Heart left ventricle (tissue), 16 donors: ENCODE measurements at regions of chr11 and their contacts with region 1.

Region 1: DNA sequence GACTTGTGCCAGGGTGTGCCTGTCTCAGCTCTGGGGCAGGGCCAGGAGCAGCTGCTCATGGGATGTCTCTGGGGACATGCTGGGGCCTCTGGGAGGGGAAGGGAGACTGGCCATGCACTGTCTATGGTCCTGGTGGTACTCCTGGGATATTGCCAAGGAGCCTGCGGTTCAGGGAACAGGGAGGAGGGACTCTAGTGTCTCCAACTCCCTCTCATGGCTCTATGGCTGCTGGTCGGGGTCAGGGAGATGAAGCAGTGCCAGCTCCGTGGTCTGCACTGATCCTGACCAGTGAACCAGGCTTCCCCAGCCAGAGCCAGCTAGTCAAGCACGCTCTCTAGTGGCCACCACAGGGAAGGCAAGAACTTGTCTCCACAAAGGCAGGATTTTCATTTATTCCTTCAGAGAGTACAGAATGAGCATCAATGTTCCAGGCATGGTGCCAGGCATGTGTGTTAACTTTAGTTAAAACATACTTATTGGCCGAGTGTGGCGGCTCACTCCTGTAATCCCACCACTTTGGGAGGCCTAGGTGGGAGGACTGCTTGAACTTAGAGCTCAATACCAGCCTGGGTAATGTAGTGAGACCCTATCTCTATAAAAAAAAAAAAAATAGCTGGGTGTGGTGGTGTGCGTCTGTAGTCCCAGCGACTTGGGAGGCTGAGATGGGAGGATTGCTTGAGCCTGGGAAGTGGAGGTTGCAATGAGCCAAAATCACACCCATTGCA is 2.5 kb upstream of the BEST1 start:
- DNase-seq: peak; percentile 85 to 93 (median 87)
- ATAC-seq: peak; percentile 57 to 87 (median 82)
- H3K4me3 ChIP-seq: no peak overlapping the region
- H3K27ac ChIP-seq: no peak overlapping the region
- H3K4me1 ChIP-seq: peaks cover 0 to 29% (median 11%) of the 10 kb centered on the region in 12 donors
- H3K27me3 ChIP-seq: no peaks in the 10 kb centered on the region
- CTCF ChIP-seq: peak; percentile 87 to 98 (median 93)
- POLR2A ChIP-seq: no peak

Region 2: DNA sequence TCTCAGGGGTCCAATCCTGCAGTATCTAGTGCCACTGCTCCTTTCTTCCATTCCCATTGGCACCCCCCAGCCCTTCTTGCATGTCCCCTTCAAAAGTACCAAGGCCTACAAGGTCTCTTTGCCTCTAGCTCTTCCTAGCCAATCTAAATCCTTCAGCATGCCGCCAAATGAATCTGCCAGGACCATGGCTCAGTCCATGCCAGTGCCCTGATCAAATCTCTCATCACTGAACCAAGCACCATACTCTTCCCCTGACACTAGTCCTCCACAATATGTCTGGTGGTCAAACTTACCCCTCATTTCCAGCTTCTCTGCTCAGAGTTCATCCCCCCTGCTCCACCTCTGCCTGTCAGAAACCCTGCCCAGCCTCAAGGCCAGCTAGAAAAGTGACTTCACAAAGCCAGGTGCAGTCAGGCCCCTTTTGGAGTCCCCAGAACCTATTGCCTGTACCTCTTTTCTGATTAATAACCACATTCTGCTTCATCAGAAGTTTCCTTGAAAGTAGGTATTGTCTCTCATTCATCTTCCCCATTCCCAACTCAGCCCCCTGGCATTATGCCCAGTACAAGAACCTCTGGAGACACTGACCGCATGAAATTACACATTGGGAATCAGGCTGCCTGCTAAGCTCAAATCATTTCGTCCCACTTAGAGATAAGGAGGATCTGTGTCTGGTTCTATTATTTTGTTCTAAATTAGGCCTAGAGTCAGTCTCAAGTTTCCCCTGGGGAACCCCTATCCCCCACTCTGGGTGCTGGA is 143.6 kb before region 1 on chr11:
- intact Hi-C with region 1: loop called in 7 of 10 experiments (anchors 5 kb)
- DNase-seq: peak in 1 of 5 donors; percentile 15
- ATAC-seq: no peak
- H3K4me3 ChIP-seq: no peak overlapping the region
- H3K27ac ChIP-seq: no peak overlapping the region
- H3K4me1 ChIP-seq: peaks cover 0 to 7% (median 0%) of the 10 kb centered on the region in 12 donors
- H3K27me3 ChIP-seq: no peaks in the 10 kb centered on the region
- CTCF ChIP-seq: no peak
- POLR2A ChIP-seq: no peak

Region 3: DNA sequence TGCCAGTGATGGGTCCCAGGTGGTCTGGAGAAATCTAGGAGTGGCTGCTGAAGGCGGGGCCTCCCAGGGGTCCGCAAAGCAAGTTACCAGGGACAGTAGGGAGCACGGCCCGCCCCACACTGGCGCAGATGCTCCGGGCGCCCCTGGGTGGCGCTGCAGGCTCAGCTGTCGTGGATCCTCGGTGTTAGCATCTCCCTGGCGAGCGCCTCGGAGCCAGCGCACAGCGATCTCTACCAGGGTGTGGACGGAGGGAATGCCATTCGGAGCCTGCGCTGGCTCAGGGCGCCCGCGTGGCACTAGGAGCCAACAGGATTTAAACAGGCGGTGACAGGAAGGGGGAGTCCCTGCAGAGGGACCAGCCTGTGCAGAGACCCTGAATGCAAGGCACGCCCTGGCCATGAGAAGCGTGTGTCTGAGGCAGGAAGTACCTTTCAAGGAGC is 76.5 kb before region 1 on chr11:
- intact Hi-C with region 1: loop called in 7 of 10 experiments (anchors 1 to 2 kb)
- DNase-seq: peak; percentile 80 to 92 (median 88)
- ATAC-seq: peak; percentile 79 to 90 (median 84)
- H3K4me3 ChIP-seq: peak overlapping the region in 7 of 12 donors; percentile 11 to 41 (median 20)
- H3K27ac ChIP-seq: peak overlapping the region in 9 of 12 donors; percentile 1 to 82 (median 56)
- H3K4me1 ChIP-seq: peaks cover 2 to 48% (median 20%) of the 10 kb centered on the region in 12 donors
- H3K27me3 ChIP-seq: no peaks in the 10 kb centered on the region
- CTCF ChIP-seq: peak; percentile 88 to 98 (median 94)
- POLR2A ChIP-seq: peak in 1 of 2 donors; percentile 13

Region 4: GRCh38 chr11:61899146-61899841 is 48.4 kb before region 1 on chr11:
- intact Hi-C with region 1: loop called (anchors 1 to 2 kb)
- DNase-seq: peak; percentile 72 to 93 (median 83)
- ATAC-seq: peak; percentile 70 to 85 (median 81)
- H3K4me3 ChIP-seq: no peak overlapping the region
- H3K27ac ChIP-seq: peak overlapping the region in 5 of 12 donors; percentile 2 to 36 (median 11)
- H3K4me1 ChIP-seq: peaks cover 0 to 22% (median 3%) of the 10 kb centered on the region in 12 donors
- H3K27me3 ChIP-seq: no peaks in the 10 kb centered on the region
- CTCF ChIP-seq: peak; percentile 99 to 100 (median 100)
- POLR2A ChIP-seq: no peak

Region 5: DNA sequence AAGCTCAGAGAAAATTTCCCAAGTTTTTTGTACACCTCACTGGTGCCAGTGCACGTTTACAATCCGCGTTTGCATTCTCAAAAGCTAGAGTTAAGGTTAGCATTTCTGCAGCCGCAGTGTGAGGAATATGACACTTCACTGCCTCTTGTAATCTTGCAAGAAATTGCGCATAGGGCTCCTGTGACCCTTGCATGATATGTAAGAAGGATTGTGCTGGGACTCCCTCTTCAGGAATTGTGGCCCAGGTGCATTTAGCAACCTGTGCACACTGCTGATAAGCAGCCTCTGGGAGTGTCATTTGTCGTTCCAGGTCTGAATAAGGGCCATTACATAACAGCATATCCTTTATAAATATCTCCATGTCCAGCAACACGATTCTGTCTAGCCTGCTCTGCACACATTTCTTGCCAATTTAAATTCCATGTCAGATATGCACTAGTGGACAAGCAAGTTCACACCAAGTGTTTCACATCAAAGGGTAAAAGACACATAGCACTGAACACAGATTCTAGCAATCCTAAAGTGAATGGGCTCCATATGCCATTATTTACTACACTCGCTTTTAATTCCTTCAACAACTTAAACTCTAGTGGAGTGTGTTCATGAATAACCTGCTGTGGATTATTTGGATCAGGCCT is 107.0 kb after region 1 on chr11:
- intact Hi-C with region 1: loop called in 1 of 10 experiments (anchors 10 kb)
- DNase-seq: no peak
- ATAC-seq: no peak
- H3K4me3 ChIP-seq: no peak overlapping the region
- H3K27ac ChIP-seq: no peak overlapping the region
- H3K4me1 ChIP-seq: peaks cover 0 to 10% (median 3%) of the 10 kb centered on the region in 12 donors
- H3K27me3 ChIP-seq: no peaks in the 10 kb centered on the region
- CTCF ChIP-seq: peak; percentile 9 to 38 (median 26)
- POLR2A ChIP-seq: no peak

Region 6: DNA sequence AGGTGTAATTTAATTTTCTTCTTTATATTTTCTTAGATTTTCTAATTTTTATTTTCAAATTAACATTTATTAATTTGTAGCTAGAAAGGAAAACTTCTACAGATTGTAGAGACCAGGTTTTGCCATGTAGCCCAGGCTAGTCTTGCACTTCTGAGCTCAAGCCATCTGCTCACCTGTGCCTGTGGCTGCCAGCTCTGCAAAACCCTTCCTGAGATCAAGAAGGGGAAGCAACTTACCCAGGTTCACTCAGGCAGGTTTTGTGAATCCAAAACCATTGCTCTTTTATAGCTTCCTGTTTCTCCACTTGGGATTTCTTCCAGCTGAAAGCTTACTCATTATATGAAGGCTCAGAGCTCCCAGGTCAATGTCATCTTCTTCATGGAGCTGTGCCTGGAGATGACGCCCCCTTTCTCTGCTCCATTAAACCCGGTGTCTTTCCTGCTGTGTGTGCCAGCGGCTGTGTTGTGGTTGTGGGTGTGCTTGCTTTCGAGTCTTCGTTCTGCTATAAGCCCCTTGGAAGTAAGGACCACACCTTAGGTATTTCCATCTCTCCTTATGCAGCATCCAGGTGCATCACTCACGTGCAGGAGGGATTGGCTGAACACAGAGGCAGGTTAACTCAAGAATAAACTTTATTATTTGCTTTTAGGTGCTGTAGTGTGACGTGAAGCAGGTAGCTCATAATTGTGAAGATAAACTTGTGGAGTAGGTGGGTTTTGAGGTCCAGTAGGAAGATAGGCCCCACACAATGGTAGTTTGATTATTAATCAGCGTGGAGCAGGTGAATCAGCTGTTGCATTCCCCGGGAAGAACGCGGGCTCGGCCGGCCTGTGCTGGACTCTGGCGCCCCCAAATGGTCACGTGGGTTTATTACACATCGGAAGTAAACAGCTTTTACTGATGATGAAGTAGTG is 134.0 kb after region 1 on chr11:
- intact Hi-C with region 1: loop called in 7 of 10 experiments (anchors 2 to 5 kb)
- DNase-seq: peak; percentile 72 to 88 (median 81)
- ATAC-seq: peak; percentile 61 to 89 (median 83)
- H3K4me3 ChIP-seq: peak overlapping the region in 1 of 12 donors; percentile 18
- H3K27ac ChIP-seq: no peak overlapping the region
- H3K4me1 ChIP-seq: peaks cover 0 to 11% (median 0%) of the 10 kb centered on the region in 12 donors
- H3K27me3 ChIP-seq: no peaks in the 10 kb centered on the region
- CTCF ChIP-seq: peak; percentile 82 to 97 (median 93)
- POLR2A ChIP-seq: no peak

Region 7: GRCh38 chr11:62108017-62108750 is 160.5 kb after region 1 on chr11:
- intact Hi-C with region 1: loop called in 1 of 10 experiments (anchors 2 kb)
- DNase-seq: peak in 2 of 5 donors; percentile 39 to 59
- ATAC-seq: peak in 2 of 4 donors; percentile 50 to 51
- H3K4me3 ChIP-seq: no peak overlapping the region
- H3K27ac ChIP-seq: peak overlapping the region in 5 of 12 donors; percentile 14 to 70 (median 27)
- H3K4me1 ChIP-seq: peaks cover 4 to 51% (median 20%) of the 10 kb centered on the region in 12 donors
- H3K27me3 ChIP-seq: no peaks in the 10 kb centered on the region
- CTCF ChIP-seq: peak; percentile 78 to 91 (median 82)
- POLR2A ChIP-seq: no peak

Region 8: DNA sequence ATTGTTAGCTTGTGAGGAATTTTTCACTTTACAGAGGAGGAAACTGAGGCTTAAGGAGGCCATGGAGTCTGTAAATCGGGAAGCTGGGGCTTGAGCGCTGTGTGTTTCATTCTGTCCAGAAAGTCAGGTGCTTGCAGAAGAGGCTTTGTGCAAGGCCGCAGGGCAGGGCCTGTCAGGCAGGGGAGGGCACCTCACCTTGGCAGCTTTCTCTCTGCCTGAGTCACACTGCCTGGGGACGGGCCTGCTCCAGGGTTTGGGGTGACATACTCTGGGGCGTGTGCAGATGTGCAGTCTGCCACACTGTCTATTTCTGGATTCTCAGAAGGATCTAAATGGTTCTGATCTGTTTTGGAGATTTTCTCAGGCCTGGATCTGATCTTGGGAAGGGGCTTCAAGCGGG is 184.5 kb after region 1 on chr11:
- intact Hi-C with region 1: no loop called
- DNase-seq: no peak
- ATAC-seq: peak in 2 of 4 donors; percentile 27 to 35
- H3K4me3 ChIP-seq: no peak overlapping the region
- H3K27ac ChIP-seq: no peak overlapping the region
- H3K4me1 ChIP-seq: no peaks in the 10 kb centered on the region
- H3K27me3 ChIP-seq: no peaks in the 10 kb centered on the region
- CTCF ChIP-seq: no peak
- POLR2A ChIP-seq: no peak